H1 (cell line): ENCODE measurements at regions of chr14 and their contacts with region 1.

Region 1: DNA sequence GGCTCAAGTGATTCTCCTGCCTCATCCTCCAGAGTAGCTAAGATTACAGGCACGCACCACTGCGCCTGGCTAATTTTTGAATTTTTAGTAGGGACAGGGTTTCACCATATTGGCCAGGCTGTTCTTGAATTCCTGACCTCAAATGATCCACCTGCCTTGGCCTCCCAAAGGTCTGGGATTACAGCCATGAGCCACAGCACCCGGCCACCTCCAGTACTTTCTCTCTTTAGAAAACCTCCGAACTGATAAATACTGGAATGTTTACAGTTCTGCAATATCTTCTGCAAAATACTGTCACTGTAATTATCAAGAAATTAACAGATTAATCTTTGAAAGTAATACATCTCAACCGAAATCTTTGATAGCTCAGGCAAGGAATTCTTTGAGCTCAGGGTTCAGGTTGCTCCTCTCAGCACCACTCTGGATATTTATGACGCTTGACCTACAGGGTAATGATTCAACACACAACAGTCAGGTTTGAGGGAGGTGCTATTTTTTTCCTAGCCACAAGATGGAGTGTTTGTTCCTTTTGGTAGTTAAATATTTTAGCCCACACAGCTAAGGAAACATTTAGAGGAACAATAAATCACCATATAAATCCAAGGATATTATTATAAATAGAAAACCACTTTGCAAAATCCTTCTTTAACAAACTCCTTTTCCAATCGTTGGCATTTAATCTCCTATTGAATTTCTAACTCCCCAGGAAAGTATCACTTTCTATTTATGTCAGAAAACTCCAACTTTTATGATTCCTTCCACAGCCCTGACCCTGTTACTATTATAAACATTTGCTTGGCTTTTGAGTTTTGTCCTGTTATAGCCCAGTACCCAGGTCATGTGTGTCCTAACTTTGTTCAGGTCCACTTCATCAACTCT is 48.6 kb upstream of the GTF2A1 start:
- DNase-seq: no peak
- H3K4me3 ChIP-seq: no peak overlapping the region
- H3K27ac ChIP-seq: no peak overlapping the region
- H3K4me1 ChIP-seq: no peaks in the 10 kb centered on the region
- H3K27me3 ChIP-seq: no peaks in the 10 kb centered on the region
- CTCF ChIP-seq: peak in 2 of 3 experiments; percentile 69 to 71; a peak in 3 of 4 replicates
- EP300 ChIP-seq: no peak
- POLR2A ChIP-seq: no peak
- RAD21 ChIP-seq: peak; percentile 87 to 88

Region 2: DNA sequence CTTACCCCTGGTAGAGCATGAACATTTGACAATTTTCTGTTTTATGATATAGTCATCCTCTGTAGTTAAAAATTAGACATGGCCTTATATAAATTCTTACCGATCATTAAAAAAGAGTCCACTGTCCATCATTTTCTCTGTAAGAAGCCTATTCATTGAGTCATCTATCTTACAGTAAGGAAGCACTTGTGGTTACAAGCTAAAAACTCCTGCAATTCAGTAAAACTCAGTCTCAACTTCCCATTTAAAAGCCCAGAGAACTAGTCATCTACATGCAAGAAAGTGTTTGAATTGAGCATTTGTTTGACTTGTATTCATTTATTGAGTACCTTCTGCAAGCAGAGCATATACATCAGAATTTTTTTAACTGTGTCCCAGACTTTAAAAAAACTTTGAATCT is 111.9 kb before region 1 on chr14:
- CTCF ChIA-PET with region 1: no interaction called
- POLR2A ChIA-PET with region 1: no interaction called
- DNase-seq: no peak
- H3K4me3 ChIP-seq: no peak overlapping the region
- H3K27ac ChIP-seq: no peak overlapping the region
- H3K4me1 ChIP-seq: no peaks in the 10 kb centered on the region
- H3K27me3 ChIP-seq: no peaks in the 10 kb centered on the region
- CTCF ChIP-seq: no peak
- EP300 ChIP-seq: no peak
- POLR2A ChIP-seq: no peak
- RAD21 ChIP-seq: no peak

Region 3: DNA sequence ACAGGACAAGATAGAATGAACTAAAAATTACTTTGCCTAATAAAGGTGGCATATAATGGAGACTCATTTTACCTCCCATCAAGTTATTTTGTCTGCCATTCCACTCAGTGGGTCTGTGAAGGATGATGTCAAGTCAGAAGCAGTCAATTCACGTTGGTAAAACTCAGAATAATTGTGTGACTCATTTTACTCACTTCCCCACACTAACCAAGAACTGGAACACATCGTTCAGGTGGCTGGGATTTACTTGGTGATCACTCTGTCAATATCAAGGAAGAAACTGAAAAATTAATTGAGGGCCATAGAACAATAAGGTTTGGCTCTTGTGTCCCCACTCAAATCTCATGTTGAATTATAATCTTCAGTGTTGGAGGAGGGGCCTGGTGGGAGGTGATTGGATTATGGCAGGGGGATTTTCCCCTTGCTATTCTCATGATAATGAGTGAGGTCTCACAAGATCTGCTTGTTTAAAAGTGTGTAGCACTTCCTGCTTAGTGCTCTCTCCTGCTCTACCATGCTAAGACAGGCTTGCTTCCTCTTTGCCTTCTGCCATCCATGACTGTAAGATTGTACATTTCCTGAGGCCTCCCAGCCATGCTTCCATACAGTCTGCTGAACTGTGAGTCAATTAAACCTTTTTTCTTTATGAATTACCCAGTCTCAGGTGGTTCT is 12.9 kb before region 1 on chr14:
- CTCF ChIA-PET with region 1: interaction called, 26 read pairs
- POLR2A ChIA-PET with region 1: no interaction called
- DNase-seq: no peak
- H3K4me3 ChIP-seq: no peak overlapping the region
- H3K27ac ChIP-seq: no peak overlapping the region
- H3K4me1 ChIP-seq: peaks cover 0 to 4% (median 1%) of the 10 kb centered on the region in 4 experiments; a peak in 1 of 7 replicates
- H3K27me3 ChIP-seq: no peaks in the 10 kb centered on the region
- CTCF ChIP-seq: no peak
- EP300 ChIP-seq: no peak
- POLR2A ChIP-seq: no peak
- RAD21 ChIP-seq: no peak

Region 4: DNA sequence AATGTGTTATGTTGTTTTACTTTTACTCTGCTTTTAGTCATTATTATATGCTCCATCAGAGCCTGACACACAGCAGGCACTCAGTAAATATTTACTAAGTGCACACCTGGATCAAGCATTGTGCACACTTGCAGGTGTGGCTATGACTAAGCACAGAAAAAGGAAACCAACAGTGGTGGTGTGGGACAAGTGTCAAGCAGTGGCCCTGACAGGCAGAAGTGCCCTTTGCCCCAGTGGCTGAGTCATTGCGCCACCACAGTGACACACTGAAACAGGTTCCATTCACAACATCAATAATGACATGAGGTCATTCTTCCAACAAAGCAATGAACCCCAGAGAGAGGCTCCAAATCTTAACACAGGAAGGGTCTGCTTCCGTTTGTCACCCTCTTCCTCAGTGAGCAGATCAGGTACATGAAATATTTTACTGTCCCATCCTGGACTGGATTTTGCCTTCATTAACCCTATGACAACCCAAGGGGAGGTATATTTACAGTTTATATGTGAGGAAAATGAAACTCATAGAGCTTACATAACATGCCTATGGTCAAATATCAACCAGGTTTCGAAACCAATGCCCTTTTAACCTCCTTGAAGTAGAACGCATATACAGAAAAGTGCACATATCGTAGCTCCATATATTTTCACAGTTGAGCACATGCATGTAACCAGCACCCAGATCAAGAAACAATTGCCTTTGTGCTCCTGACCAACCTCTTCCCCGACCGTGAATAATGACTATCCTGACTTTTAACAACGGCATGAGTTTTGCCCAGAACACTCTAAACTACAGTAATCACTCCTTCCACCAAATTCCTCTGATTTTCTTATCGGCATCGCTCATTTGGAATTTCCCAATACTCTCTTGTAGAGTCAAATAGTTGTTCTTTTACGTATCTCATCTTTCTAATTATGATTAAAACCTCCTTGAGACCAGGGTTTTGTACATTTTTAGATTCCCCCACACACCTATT is 34.2 kb after region 1 on chr14:
- CTCF ChIA-PET with region 1: interaction called, 17 read pairs
- POLR2A ChIA-PET with region 1: no interaction called
- DNase-seq: no peak
- H3K4me3 ChIP-seq: no peak overlapping the region
- H3K27ac ChIP-seq: no peak overlapping the region
- H3K4me1 ChIP-seq: peaks cover 0 to 7% (median 2%) of the 10 kb centered on the region in 4 experiments; a peak in 3 of 7 replicates
- H3K27me3 ChIP-seq: peaks cover 0 to 3% (median 0%) of the 10 kb centered on the region in 4 experiments; a peak in 1 of 7 replicates
- CTCF ChIP-seq: no peak
- EP300 ChIP-seq: no peak
- POLR2A ChIP-seq: no peak
- RAD21 ChIP-seq: no peak

Region 5: GRCh38 chr14:81309511-81309910 is 40.2 kb after region 1 on chr14:
- CTCF ChIA-PET with region 1: interaction called, 12 read pairs
- POLR2A ChIA-PET with region 1: no interaction called
- DNase-seq: no peak
- H3K4me3 ChIP-seq: no peak overlapping the region
- H3K27ac ChIP-seq: no peak overlapping the region
- H3K4me1 ChIP-seq: peaks cover 2 to 24% (median 16%) of the 10 kb centered on the region in 4 experiments; a peak in 5 of 7 replicates
- H3K27me3 ChIP-seq: peaks cover 0 to 3% (median 0%) of the 10 kb centered on the region in 4 experiments; a peak in 1 of 7 replicates
- CTCF ChIP-seq: no peak
- EP300 ChIP-seq: no peak
- POLR2A ChIP-seq: no peak
- RAD21 ChIP-seq: no peak

Region 6: GRCh38 chr14:81315341-81315740 is 46.0 kb after region 1 on chr14:
- CTCF ChIA-PET with region 1: interaction called, 12 read pairs
- POLR2A ChIA-PET with region 1: no interaction called
- DNase-seq: peak in 1 of 2 experiments; percentile 31
- H3K4me3 ChIP-seq: peak overlapping the region in 1 of 4 experiments; percentile 27; a peak in 1 of 8 replicates
- H3K27ac ChIP-seq: peak overlapping the region; percentile 90
- H3K4me1 ChIP-seq: peaks cover 6 to 29% (median 23%) of the 10 kb centered on the region in 4 experiments; a peak in 6 of 7 replicates
- H3K27me3 ChIP-seq: no peaks in the 10 kb centered on the region
- CTCF ChIP-seq: no peak
- EP300 ChIP-seq: peak in 1 of 2 experiments; percentile 83; a peak in 1 of 3 replicates
- POLR2A ChIP-seq: peak in 1 of 2 experiments; percentile 50; a peak in 2 of 3 replicates
- RAD21 ChIP-seq: no peak

Region 7: GRCh38 chr14:81436296-81437138 is 167.2 kb after region 1 on chr14:
- CTCF ChIA-PET with region 1: interaction called, 14 read pairs
- POLR2A ChIA-PET with region 1: interaction called, 4 read pairs
- DNase-seq: peak in 1 of 2 experiments; percentile 87
- H3K4me3 ChIP-seq: peak overlapping the region; percentile 50 to 86 (median 75)
- H3K27ac ChIP-seq: no peak overlapping the region
- H3K4me1 ChIP-seq: peaks cover 7 to 16% (median 13%) of the 10 kb centered on the region in 4 experiments
- H3K27me3 ChIP-seq: peaks cover 1 to 14% (median 9%) of the 10 kb centered on the region in 4 experiments; a peak in 6 of 7 replicates
- CTCF ChIP-seq: no peak
- EP300 ChIP-seq: no peak
- POLR2A ChIP-seq: no peak
- RAD21 ChIP-seq: no peak

Region 8: GRCh38 chr14:81464247-81465002 is 195.1 kb after region 1 on chr14:
- CTCF ChIA-PET with region 1: interaction called, 426 read pairs
- POLR2A ChIA-PET with region 1: no interaction called
- DNase-seq: peak; percentile 9 to 80
- H3K4me3 ChIP-seq: peak overlapping the region; percentile 9 to 51 (median 30); a peak in 5 of 8 replicates
- H3K27ac ChIP-seq: no peak overlapping the region
- H3K4me1 ChIP-seq: no peaks in the 10 kb centered on the region
- H3K27me3 ChIP-seq: no peaks in the 10 kb centered on the region
- CTCF ChIP-seq: peak in 2 of 3 experiments; percentile 77 to 83; a peak in 3 of 4 replicates
- EP300 ChIP-seq: no peak
- POLR2A ChIP-seq: no peak
- RAD21 ChIP-seq: peak; percentile 94 to 95